HEK293 (cell line): ENCODE measurements at regions of chr6 and their contacts with region 1.

Region 1: DNA sequence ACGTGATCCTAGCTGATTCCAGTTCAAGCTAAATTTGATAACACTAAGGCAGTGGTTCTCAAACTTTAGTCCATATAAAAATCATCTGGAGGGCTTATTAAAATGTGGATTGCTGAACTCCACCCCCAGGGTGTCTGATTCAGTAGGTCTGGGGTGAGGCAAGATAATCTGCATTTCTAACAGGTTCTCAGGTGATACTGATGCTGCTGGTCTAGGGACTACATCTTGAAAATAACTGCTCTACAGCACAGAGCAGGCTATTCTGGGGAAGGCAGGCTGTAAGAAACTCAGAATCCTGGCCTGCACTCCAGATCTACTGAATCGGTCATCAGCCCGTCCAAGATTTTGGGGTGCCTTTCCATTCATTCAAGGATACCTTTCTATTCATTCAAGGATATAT is 11.4 kb downstream of the CALHM5 start:
- H3K4me3 ChIP-seq: no peak overlapping the region
- H3K27ac ChIP-seq: no peak overlapping the region
- H3K4me1 ChIP-seq: peaks cover 14% of the 10 kb centered on the region
- CTCF ChIP-seq: no peak

Region 2: GRCh38 chr6:115958958-115959357 is 563.9 kb before region 1 on chr6:
- CTCF ChIA-PET with region 1: no interaction called
- POLR2A ChIA-PET with region 1: interaction called, 10 read pairs
- H3K4me3 ChIP-seq: no peak overlapping the region
- H3K27ac ChIP-seq: no peak overlapping the region
- H3K4me1 ChIP-seq: no peaks in the 10 kb centered on the region
- CTCF ChIP-seq: no peak